ENCODE measurements at regions of chr1 and their contacts with region 1.

Region 1: GRCh38 chr1:23916209-23917131 is 3.3 kb upstream of the CNR2 start:
- DNase-seq: peak; percentile 82

Region 2: DNA sequence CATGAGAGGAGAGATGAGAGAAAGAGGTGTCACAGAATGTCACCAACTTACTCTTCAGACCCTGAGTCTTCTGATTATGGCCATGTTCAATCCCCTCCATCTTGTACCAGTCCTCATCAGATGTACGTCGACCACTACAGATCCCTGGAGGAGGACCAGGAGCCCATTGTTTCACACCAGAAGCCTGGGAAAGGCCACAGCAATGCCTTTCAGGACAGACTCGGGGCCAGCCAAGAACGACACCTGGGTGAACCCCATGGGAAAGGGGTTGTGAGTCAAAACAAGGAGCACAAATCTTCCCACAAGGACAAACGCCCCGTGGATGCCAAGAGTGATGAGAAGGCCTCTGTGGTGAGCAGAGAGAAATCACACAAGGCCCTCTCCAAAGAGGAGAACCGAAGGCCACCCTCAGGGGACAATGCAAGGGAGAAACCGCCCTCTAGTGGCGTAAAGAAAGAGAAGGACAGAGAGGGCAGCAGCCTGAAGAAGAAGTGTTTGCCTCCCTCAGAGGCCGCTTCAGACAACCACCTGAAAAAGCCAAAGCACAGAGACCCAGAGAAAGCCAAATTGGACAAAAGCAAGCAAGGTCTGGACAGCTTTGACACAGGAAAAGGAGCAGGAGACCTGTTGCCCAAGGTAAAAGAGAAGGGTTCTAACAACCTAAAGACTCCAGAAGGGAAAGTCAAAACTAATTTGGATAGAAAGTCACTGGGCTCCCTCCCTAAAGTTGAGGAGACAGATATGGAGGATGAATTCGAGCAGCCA is 165.2 kb before region 1 on chr1:
- intact Hi-C with region 1: no loop called
- DNase-seq: no peak

Region 3: GRCh38 chr1:23772049-23772853 is 144.2 kb before region 1 on chr1:
- intact Hi-C with region 1: loop called (anchors 5 kb)
- DNase-seq: peak; percentile 94

Region 4: DNA sequence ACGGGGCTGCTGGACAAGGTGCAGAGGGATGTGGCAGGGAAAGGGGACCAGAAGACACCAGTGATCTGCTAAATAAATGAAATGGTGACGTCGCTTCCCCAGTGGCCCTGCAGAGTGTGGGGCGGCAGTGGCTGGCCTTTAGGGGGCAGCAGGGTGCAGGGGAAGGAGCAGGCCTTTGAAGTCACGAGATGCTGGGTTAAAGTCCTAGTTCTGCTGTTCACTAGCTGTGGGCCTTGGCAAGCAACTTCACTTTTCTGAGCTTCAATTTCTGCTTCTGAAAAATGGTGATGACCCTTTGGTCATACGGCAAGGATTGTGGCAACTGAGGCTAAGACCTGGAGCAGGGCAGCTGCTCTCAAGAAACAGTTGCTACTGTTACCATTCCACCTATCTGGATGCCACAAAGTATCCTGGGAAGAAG is 106.7 kb before region 1 on chr1:
- intact Hi-C with region 1: loop called (anchors 5 kb)
- DNase-seq: no peak

Region 5: DNA sequence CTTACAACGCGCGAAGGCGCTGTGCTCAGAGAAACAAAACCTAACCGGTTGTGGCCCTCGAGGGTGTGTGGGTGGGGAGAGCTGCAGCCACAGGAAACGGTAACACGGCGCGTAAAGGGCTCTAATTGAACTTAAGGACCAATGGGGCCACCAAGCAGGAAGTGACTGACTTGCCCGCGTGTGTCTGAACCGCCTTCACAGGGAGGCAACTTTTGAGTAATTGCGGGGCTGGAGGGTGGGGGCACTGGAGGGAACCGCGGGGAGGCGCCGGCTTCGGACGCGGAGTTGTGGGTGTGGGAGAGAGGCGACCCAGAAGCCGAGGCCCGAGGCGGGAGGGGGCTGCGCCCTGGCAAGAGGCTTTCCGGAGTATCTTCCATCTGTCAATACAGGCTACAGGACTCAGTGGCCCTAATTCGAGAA is 42.6 kb after region 1 on chr1:
- intact Hi-C with region 1: loop called (anchors 2 kb)
- DNase-seq: peak; percentile 91

Region 6: GRCh38 chr1:24018611-24019580 is 102.4 kb after region 1 on chr1:
- intact Hi-C with region 1: loop called (anchors 2 kb)
- DNase-seq: peak; percentile 92

Measured in cardiac septum (tissue), 1 donor.